Transverse colon (tissue), 4 donors: ENCODE measurements at regions of chr1 and their contacts with region 1.

Region 1: GRCh38 chr1:208951908-208952307 is 631.6 kb upstream of the CAMK1G start:
- DNase-seq: peak; percentile 15
- H3K4me3 ChIP-seq: no peak overlapping the region
- H3K27ac ChIP-seq: peak overlapping the region; percentile 47 to 68 (median 58)
- H3K4me1 ChIP-seq: peaks cover 3 to 27% (median 17%) of the 10 kb centered on the region in 4 donors
- H3K27me3 ChIP-seq: no peaks in the 10 kb centered on the region
- CTCF ChIP-seq: no peak
- EP300 ChIP-seq: no peak
- POLR2A ChIP-seq: no peak

Region 2: GRCh38 chr1:208419746-208420420 is 532.0 kb before region 1 on chr1:
- in situ Hi-C with region 1: no loop called
- intact Hi-C with region 1: loop called (anchors 5 kb)
- DNase-seq: no peak
- H3K4me3 ChIP-seq: no peak overlapping the region
- H3K27ac ChIP-seq: no peak overlapping the region
- H3K4me1 ChIP-seq: no peaks in the 10 kb centered on the region
- H3K27me3 ChIP-seq: no peaks in the 10 kb centered on the region
- CTCF ChIP-seq: no peak
- EP300 ChIP-seq: no peak
- POLR2A ChIP-seq: no peak

Region 3: GRCh38 chr1:208747979-208748378 is 203.9 kb before region 1 on chr1:
- in situ Hi-C with region 1: no loop called
- intact Hi-C with region 1: no loop called
- DNase-seq: no peak
- H3K4me3 ChIP-seq: no peak overlapping the region
- H3K27ac ChIP-seq: no peak overlapping the region
- H3K4me1 ChIP-seq: peaks cover 0 to 9% (median 4%) of the 10 kb centered on the region in 4 donors
- H3K27me3 ChIP-seq: no peaks in the 10 kb centered on the region
- CTCF ChIP-seq: no peak
- EP300 ChIP-seq: no peak
- POLR2A ChIP-seq: no peak

Region 4: GRCh38 chr1:208766832-208767231 is 185.1 kb before region 1 on chr1:
- in situ Hi-C with region 1: no loop called
- intact Hi-C with region 1: no loop called
- DNase-seq: no peak
- H3K4me3 ChIP-seq: no peak overlapping the region
- H3K27ac ChIP-seq: no peak overlapping the region
- H3K4me1 ChIP-seq: no peaks in the 10 kb centered on the region
- H3K27me3 ChIP-seq: no peaks in the 10 kb centered on the region
- CTCF ChIP-seq: no peak
- EP300 ChIP-seq: no peak
- POLR2A ChIP-seq: no peak

Region 5: GRCh38 chr1:209045326-209046057 is 93.6 kb after region 1 on chr1:
- in situ Hi-C with region 1: no loop called
- intact Hi-C with region 1: no loop called
- DNase-seq: peak; percentile 12
- H3K4me3 ChIP-seq: no peak overlapping the region
- H3K27ac ChIP-seq: no peak overlapping the region
- H3K4me1 ChIP-seq: peaks cover 0 to 7% (median 3%) of the 10 kb centered on the region in 4 donors
- H3K27me3 ChIP-seq: no peaks in the 10 kb centered on the region
- CTCF ChIP-seq: no peak
- EP300 ChIP-seq: no peak
- POLR2A ChIP-seq: no peak